ENCODE measurements at regions of chr2 and their contacts with region 1.

Region 1: GRCh38 chr2:230018153-230018552 is 50.6 kb downstream of the SLC16A14 start:
- DNase-seq: no peak
- H3K4me3 ChIP-seq: no peak overlapping the region
- H3K27ac ChIP-seq: no peak overlapping the region
- H3K4me1 ChIP-seq: no peaks in the 10 kb centered on the region
- H3K27me3 ChIP-seq: no peaks in the 10 kb centered on the region
- CTCF ChIP-seq: no peak

Region 2: GRCh38 chr2:229955663-229956062 is 62.5 kb before region 1 on chr2:
- intact Hi-C with region 1: no loop called
- DNase-seq: no peak
- H3K4me3 ChIP-seq: no peak overlapping the region
- H3K27ac ChIP-seq: no peak overlapping the region
- H3K4me1 ChIP-seq: no peaks in the 10 kb centered on the region
- H3K27me3 ChIP-seq: no peaks in the 10 kb centered on the region
- CTCF ChIP-seq: no peak

Region 3: GRCh38 chr2:229974266-229974665 is 43.9 kb before region 1 on chr2:
- intact Hi-C with region 1: no loop called
- DNase-seq: no peak
- H3K4me3 ChIP-seq: no peak overlapping the region
- H3K27ac ChIP-seq: no peak overlapping the region
- H3K4me1 ChIP-seq: peaks cover 9% of the 10 kb centered on the region
- H3K27me3 ChIP-seq: no peaks in the 10 kb centered on the region
- CTCF ChIP-seq: peak; percentile 48

Region 4: GRCh38 chr2:230160112-230160660 is 142.0 kb after region 1 on chr2:
- intact Hi-C with region 1: loop called (anchors 10 kb)
- DNase-seq: no peak
- H3K4me3 ChIP-seq: no peak overlapping the region
- H3K27ac ChIP-seq: no peak overlapping the region
- H3K4me1 ChIP-seq: peaks cover 3% of the 10 kb centered on the region
- H3K27me3 ChIP-seq: no peaks in the 10 kb centered on the region
- CTCF ChIP-seq: peak; percentile 85

Region 5: GRCh38 chr2:230244211-230244610 is 226.1 kb after region 1 on chr2:
- intact Hi-C with region 1: no loop called
- DNase-seq: no peak
- H3K4me3 ChIP-seq: no peak overlapping the region
- H3K27ac ChIP-seq: no peak overlapping the region
- H3K4me1 ChIP-seq: no peaks in the 10 kb centered on the region
- H3K27me3 ChIP-seq: no peaks in the 10 kb centered on the region
- CTCF ChIP-seq: no peak

Measured in left ventricle myocardium inferior (tissue), 1 donor.